BJ (cell line): ENCODE measurements at regions of chr1 and their contacts with region 1.

Region 1: GRCh38 chr1:62712336-62713243 is 24.4 kb upstream of the DOCK7 start:
- DNase-seq: no peak
- H3K4me3 ChIP-seq: no peak overlapping the region
- H3K27me3 ChIP-seq: no peaks in the 10 kb centered on the region
- CTCF ChIP-seq: no peak

Region 2: GRCh38 chr1:62722796-62723195 is 10.2 kb after region 1 on chr1:
- CTCF ChIA-PET with region 1: interaction called, 12 read pairs
- POLR2A ChIA-PET with region 1: no interaction called
- DNase-seq: no peak
- H3K4me3 ChIP-seq: no peak overlapping the region
- H3K27me3 ChIP-seq: no peaks in the 10 kb centered on the region
- CTCF ChIP-seq: no peak

Region 3: DNA sequence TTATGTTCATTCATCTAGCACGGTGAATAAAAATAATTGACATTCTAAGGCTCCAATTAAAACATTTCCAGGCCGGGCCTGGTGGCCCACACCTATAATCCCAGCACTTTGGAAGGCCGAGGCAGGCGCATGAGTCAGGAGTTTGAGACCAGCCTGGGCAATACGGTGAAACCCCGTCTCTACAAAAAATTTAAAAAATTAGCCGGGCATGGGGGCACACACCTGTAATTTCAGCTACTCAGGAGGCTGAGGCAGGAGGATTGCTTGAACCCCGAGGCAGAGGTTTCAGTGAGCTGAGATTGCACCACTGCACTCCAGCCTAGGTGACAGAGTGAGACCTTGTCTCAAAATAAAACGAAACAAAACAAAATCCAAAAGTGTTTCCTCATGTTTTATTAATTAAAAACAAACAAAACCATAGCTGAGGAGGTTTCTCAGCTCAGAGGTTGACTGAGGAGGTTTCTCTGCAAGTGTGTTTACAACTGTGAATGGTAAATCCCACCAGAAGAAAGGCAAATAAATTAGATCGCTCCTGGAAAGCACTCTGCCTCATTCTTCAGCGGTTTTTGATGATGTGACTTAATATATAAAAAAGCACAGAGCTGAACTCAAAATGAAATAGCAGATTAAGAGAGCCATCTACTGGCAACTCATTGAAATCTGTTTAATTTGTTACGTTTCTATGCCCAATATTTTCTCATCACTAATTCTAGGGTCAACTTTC is 33.7 kb after region 1 on chr1:
- CTCF ChIA-PET with region 1: no interaction called
- POLR2A ChIA-PET with region 1: no interaction called
- DNase-seq: no peak
- H3K4me3 ChIP-seq: peak overlapping the region; percentile 19; the same call in 1 of the 2 replicates
- H3K27me3 ChIP-seq: no peaks in the 10 kb centered on the region
- CTCF ChIP-seq: peak; percentile 46